ENCODE measurements at regions of chr20 and their contacts with region 1.

Region 1: GRCh38 chr20:50189681-50190582 is 698 bp upstream of the CEBPB start:
- DNase-seq: peak; percentile 90 to 96 (median 92)
- ATAC-seq: peak; percentile 54
- H3K4me3 ChIP-seq: peak overlapping the region; percentile 95
- H3K27ac ChIP-seq: peak overlapping the region; percentile 99; the same call in 1 of the 3 replicates
- H3K4me1 ChIP-seq: peaks cover 38 to 65% of the 10 kb centered on the region in 2 experiments
- H3K27me3 ChIP-seq: no peaks in the 10 kb centered on the region
- CTCF ChIP-seq: peak; percentile 53 to 77 (median 76)
- EP300 ChIP-seq: no peak
- POLR2A ChIP-seq: no peak
- RAD21 ChIP-seq: peak; percentile 81 to 84

Region 2: GRCh38 chr20:50133474-50134217 is 56.3 kb before region 1 on chr20:
- CTCF ChIA-PET with region 1: no interaction called
- POLR2A ChIA-PET with region 1: no interaction called
- in situ Hi-C with region 1: no loop called
- intact Hi-C with region 1: no loop called
- DNase-seq: no peak
- ATAC-seq: no peak
- H3K4me3 ChIP-seq: no peak overlapping the region
- H3K27ac ChIP-seq: no peak overlapping the region
- H3K4me1 ChIP-seq: peaks cover 4 to 27% of the 10 kb centered on the region in 2 experiments; a peak in 4 of 5 replicates
- H3K27me3 ChIP-seq: no peaks in the 10 kb centered on the region
- CTCF ChIP-seq: 0 out of 6 replicates have a peak, but pooled peaks of 2 of the 3 experiments have one; percentile 10 to 28
- EP300 ChIP-seq: no peak
- POLR2A ChIP-seq: no peak
- RAD21 ChIP-seq: no peak

Region 3: DNA sequence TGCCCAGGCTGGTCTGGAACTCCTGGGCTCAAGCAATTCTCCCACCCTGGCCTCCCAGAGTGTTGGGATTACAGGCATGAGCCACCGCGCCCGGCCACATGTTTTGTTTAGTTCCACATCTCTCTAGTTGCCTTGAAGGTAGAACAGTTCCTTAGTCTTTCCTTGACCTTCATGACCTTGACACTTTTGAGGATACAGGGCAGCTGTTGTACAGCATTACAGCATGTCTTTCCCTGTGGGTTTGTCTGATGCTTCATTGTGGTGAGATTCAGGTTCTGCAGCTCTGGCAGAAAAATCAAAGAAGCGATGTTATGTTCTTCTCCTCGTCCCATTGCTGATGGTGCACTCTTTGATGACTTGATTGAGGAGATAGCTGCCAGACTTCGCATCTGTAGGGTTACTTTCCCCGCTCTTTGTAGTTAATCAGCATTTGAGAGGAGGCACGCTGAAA is 12.7 kb after region 1 on chr20:
- CTCF ChIA-PET with region 1: no interaction called
- POLR2A ChIA-PET with region 1: interaction called, 17 read pairs
- in situ Hi-C with region 1: no loop called
- intact Hi-C with region 1: no loop called
- DNase-seq: no peak
- ATAC-seq: no peak
- H3K4me3 ChIP-seq: no peak overlapping the region
- H3K27ac ChIP-seq: no peak overlapping the region
- H3K4me1 ChIP-seq: peaks cover 0 to 14% of the 10 kb centered on the region in 2 experiments; a peak in 2 of 5 replicates
- H3K27me3 ChIP-seq: 0 out of 5 replicates have a peak, but pooled peaks cover 3 to 5% of the 10 kb centered on the region in 2 experiments
- CTCF ChIP-seq: no peak
- EP300 ChIP-seq: no peak
- POLR2A ChIP-seq: no peak
- RAD21 ChIP-seq: no peak

Region 4: DNA sequence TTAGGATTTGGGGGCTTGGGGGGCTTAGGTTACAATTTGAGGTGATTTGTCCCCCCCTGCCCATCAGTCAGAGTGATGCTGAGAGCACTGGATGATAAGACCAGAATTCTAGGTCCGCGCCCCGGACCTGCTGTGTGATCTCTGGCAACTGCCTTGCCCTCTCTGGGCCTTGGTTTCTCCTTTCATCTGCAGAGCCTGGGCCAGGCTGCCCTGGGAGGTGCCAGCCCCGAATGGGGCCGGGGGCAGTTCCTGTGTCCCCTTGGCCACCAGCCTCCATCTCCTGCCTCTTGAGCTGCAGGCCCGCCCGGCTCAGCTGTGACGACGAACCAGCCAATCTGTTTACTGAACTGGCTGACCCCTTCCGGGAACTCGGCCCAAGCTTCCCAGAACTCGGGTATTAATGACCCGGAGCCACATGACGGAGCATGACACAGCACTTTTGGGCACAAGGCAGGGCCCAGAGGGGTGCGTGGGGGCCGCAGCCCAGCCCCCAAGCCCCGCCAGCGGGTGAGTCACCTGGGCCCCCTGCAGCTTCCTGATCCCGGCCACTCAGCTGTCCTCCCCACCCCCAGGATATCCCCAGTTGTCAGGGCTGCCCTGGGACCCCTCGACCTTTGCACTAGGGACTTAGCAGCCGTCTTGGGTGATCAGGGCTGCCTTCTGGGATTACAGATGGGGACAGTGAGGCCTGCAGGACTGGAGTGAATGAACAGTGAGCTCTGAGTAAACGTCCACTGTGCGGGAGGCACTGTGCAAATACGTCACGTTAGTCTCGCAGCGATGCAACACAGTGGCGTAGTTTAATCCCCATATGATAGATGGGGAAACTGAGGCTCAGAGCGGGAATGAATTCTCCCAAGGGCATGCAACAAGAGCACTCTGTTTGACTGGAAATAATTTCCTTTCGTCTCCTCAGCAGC is 102.7 kb after region 1 on chr20:
- CTCF ChIA-PET with region 1: no interaction called
- POLR2A ChIA-PET with region 1: interaction called, 10 read pairs
- in situ Hi-C with region 1: no loop called
- intact Hi-C with region 1: loop called (anchors 5 kb)
- DNase-seq: peak; percentile 97 to 100 (median 98)
- ATAC-seq: peak; percentile 93
- H3K4me3 ChIP-seq: no peak overlapping the region
- H3K27ac ChIP-seq: peak overlapping the region; percentile 89
- H3K4me1 ChIP-seq: peaks cover 34 to 53% of the 10 kb centered on the region in 2 experiments
- H3K27me3 ChIP-seq: no peaks in the 10 kb centered on the region
- CTCF ChIP-seq: no peak
- EP300 ChIP-seq: peak; percentile 97
- POLR2A ChIP-seq: peak; percentile 36; the same call in 1 of the 2 replicates
- RAD21 ChIP-seq: peak; percentile 21 to 32; a peak in 3 of 4 replicates

Region 5: DNA sequence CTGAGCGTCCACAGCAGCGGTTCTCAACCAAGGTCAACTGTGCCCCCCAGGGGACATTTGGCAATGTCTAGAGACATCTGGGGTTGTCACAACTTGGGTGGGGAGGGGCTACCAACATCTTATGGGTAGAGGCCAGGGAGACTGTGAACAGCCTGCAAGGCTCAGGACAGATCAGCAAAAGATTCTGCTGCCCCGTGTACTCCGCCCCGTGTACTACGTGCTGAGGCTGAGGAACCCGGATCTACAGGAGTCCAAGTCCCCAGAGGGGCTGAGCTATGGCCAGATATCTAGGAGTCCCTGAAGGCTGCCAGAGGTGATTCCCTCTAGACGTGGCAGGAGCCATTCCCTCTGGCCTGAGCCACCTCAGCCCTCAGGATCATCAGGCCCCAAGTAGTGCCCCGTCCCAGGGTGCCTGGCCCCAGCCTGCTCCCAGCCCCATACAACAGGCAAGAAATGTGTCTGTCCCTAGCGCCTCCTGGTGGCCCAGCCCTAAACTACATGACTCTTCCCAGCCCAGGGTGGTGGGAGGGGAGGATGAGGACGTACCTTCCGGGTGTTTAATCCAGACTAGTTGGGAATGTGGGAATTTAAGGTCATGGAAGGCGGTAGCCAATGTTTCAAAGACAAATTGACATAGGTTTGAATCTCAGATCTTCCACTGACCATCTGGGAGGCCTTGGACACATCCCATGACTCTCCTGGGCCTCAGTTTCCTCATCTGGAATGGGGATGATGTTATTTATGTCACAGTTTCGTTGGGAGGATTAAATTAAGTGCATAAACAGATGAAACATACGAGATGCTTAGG is 270.7 kb after region 1 on chr20:
- CTCF ChIA-PET with region 1: interaction called, 58 read pairs
- POLR2A ChIA-PET with region 1: interaction called, 12 read pairs
- in situ Hi-C with region 1: loop called (anchors 5 kb)
- intact Hi-C with region 1: loop called (anchors 1 kb)
- DNase-seq: peak; percentile 86 to 88 (median 87)
- ATAC-seq: peak; percentile 96
- H3K4me3 ChIP-seq: no peak overlapping the region
- H3K27ac ChIP-seq: no peak overlapping the region; the same call in 2 of the 3 replicates
- H3K4me1 ChIP-seq: peaks cover 24 to 26% of the 10 kb centered on the region in 2 experiments
- H3K27me3 ChIP-seq: no peaks in the 10 kb centered on the region; a peak in 1 of 5 replicates
- CTCF ChIP-seq: peak; percentile 92 to 96 (median 94)
- EP300 ChIP-seq: no peak
- POLR2A ChIP-seq: no peak
- RAD21 ChIP-seq: peak; percentile 96 to 98

Region 6: DNA sequence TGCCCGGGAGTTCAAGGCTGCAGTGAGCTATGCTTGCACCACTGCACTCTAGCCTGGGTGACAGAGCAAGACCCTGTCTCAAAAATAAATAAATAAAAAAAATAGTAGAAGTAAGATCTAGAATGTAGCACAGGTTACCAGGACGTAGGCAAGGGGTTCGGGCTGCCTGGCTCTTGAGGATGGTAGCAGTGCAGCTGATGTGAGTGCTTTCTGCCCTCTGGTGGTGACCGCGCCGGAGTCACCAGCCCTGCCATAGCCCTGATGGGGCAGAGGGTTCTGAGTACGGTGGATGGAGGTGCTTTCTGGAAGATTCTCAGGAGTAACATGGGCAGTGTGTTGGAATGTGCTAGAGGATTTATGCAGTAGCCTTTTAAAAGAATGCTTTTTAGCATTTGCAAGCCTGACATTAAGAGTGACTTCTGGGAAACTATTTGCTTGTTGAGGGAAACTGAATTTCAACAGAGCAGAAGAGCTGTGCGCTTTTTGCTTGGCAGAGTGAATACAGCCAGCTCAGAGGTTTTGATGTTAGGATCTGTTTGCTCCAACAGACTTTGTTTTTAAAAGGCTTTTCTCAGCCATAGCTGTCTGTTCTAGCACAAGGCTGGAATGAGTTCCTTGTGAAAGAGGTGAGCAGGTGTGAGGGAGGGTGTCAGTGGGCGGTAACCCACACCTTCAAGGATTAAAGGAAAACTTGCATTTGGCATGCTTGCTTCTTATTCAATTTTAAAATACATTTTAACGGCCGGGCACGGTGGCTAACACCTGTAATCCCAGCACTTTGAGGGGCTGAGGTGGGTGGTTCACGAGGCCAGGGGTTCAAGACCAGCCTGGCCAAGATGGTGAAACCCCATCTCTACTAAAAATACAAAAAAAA is 386.2 kb after region 1 on chr20:
- CTCF ChIA-PET with region 1: interaction called, 20 read pairs
- POLR2A ChIA-PET with region 1: no interaction called
- in situ Hi-C with region 1: loop called (anchors 5 kb)
- intact Hi-C with region 1: loop called (anchors 5 kb)
- DNase-seq: peak; percentile 44 to 51 (median 47)
- ATAC-seq: peak; percentile 81
- H3K4me3 ChIP-seq: no peak overlapping the region
- H3K27ac ChIP-seq: no peak overlapping the region
- H3K4me1 ChIP-seq: peaks cover 4 to 10% of the 10 kb centered on the region in 2 experiments; a peak in 2 of 5 replicates
- H3K27me3 ChIP-seq: no peaks in the 10 kb centered on the region
- CTCF ChIP-seq: peak; percentile 57 to 67 (median 64)
- EP300 ChIP-seq: no peak
- POLR2A ChIP-seq: no peak
- RAD21 ChIP-seq: peak; percentile 51 to 70